IMR-90 (cell line): ENCODE measurements at regions of chr11 and their contacts with region 1.

Region 1: GRCh38 chr11:76919887-76920746 is 59.4 kb downstream of the ACER3 start:
- DNase-seq: peak; percentile 81
- ATAC-seq: peak; percentile 74
- H3K4me3 ChIP-seq: no peak overlapping the region
- H3K27ac ChIP-seq: no peak overlapping the region
- H3K4me1 ChIP-seq: peaks cover 3% of the 10 kb centered on the region; the same call in 1 of the 2 replicates
- H3K27me3 ChIP-seq: no peaks in the 10 kb centered on the region
- CTCF ChIP-seq: peak; percentile 90
- POLR2A ChIP-seq: no peak
- RAD21 ChIP-seq: peak; percentile 70

Region 2: DNA sequence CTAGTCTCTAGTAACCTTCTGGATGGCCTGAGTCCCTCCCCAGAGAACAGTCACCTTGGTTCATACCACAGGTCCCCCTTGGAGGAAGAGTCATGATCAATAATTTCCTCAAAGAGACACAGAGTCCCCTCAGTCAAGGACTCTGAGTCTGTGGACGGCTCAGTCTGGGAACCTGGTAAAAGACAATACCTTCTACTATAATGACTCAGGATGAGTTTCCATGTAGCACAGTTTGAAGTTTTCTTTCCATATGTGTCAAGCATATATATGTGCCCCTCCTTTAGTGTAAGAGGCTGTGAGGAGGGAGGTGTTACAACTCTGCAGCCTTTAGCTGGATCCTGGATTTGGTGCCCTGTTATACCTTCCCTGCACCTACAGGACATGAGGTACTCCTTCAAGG is 191.3 kb before region 1 on chr11:
- CTCF ChIA-PET with region 1: interaction called, 21 read pairs
- POLR2A ChIA-PET with region 1: no interaction called
- dilution Hi-C with region 1: no loop called
- in situ Hi-C with region 1: loop called (anchors 5 kb)
- intact Hi-C with region 1: no loop called
- DNase-seq: no peak
- ATAC-seq: no peak
- H3K4me3 ChIP-seq: no peak overlapping the region
- H3K27ac ChIP-seq: no peak overlapping the region
- H3K4me1 ChIP-seq: no peaks in the 10 kb centered on the region
- H3K27me3 ChIP-seq: peaks cover 73% of the 10 kb centered on the region
- CTCF ChIP-seq: no peak
- POLR2A ChIP-seq: no peak
- RAD21 ChIP-seq: no peak

Region 3: DNA sequence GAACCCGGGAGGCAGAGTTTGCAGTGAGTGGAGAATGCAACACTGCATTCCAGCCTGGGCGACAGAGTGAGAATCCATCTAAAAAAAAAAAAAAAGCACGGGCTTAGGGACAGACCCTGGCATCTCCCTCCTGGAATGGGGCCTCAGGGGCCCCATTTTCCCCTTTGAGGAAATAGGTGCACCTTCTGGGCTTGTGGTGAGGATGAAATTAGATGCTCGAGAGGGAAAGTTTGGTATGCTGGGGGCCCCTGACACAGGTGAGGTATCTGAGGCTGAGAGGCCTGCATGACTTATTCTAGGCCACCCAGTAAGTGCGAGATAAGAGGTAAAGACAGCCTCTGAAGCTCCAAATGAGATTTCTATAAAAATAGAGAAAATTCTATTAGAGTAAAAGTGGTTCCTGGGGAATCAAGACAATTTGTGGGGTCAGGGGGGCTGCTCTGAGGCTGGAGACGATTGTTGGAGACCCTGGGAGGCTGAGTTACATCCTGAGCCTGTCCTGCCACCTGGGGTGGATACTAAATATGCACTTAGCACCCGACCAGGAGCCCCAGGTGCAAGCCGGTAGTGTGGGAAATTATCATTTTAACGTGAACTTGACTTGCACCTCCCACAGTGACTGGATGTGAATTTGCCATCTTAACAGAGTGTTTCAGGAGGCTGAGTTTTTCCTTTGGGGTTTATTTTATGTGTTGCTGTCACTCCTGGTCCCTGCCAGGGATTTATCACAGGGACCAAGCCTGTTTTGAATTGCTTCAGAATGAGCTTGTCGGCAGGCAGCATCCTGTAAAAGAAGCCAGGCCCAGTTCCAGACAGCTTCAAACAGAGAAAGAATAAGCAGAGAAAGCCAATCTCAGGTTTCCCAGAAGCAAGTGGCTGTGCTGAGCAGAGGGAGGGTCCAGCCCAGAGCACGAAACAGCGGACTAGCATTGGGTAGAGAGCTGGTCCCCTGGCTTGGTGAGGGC is 185.4 kb before region 1 on chr11:
- CTCF ChIA-PET with region 1: interaction called, 21 read pairs
- POLR2A ChIA-PET with region 1: no interaction called
- dilution Hi-C with region 1: no loop called
- in situ Hi-C with region 1: loop called (anchors 5 kb)
- intact Hi-C with region 1: loop called (anchors 1 kb)
- DNase-seq: no peak
- ATAC-seq: no peak; the same call in 1 of the 2 replicates
- H3K4me3 ChIP-seq: no peak overlapping the region
- H3K27ac ChIP-seq: no peak overlapping the region
- H3K4me1 ChIP-seq: peaks cover 2% of the 10 kb centered on the region; the same call in 1 of the 2 replicates
- H3K27me3 ChIP-seq: peaks cover 52% of the 10 kb centered on the region
- CTCF ChIP-seq: no peak
- POLR2A ChIP-seq: no peak
- RAD21 ChIP-seq: no peak

Region 4: DNA sequence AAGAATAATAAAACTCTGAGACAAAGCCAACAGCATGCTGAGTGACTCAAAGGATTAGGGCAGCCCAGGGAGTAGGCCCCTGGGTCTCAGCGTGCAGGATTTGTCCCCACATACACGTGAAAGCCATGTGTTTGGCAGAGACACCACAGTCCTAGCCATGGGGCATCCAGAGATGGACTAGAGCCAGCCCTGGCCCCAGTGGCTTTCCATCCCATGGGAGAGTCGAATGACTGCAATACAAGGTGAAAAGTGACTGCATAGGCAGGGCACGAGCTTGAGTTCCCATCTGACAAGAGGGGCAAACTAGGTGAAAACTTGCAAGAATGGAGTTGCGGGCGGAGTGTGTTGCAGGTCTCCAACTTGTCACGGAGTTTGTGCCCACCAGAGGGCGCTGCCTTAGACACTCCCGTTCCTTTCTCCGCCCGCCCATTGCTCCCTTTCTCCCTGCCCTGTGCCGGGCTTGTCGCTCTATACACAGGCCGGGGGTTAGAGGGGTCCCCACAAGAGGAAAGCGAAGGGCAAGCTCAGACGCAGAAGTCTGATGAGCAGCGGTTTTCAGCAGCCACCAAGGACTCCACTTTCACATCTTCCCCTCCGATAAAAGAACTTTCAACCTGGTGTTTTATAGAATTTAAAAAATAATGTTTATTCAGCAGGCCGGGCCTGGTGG is 112.8 kb before region 1 on chr11:
- CTCF ChIA-PET with region 1: interaction called, 25 read pairs
- POLR2A ChIA-PET with region 1: interaction called, 3 read pairs
- dilution Hi-C with region 1: no loop called
- in situ Hi-C with region 1: loop called (anchors 5 kb)
- intact Hi-C with region 1: loop called (anchors 1 kb)
- DNase-seq: peak; percentile 69
- ATAC-seq: peak; percentile 62
- H3K4me3 ChIP-seq: no peak overlapping the region
- H3K27ac ChIP-seq: no peak overlapping the region
- H3K4me1 ChIP-seq: peaks cover 28% of the 10 kb centered on the region
- H3K27me3 ChIP-seq: no peaks in the 10 kb centered on the region; the same call in 1 of the 2 replicates
- CTCF ChIP-seq: peak; percentile 64
- POLR2A ChIP-seq: no peak
- RAD21 ChIP-seq: peak; percentile 58

Region 5: GRCh38 chr11:77019976-77020595 is 100.0 kb after region 1 on chr11:
- CTCF ChIA-PET with region 1: interaction called, 4 read pairs
- POLR2A ChIA-PET with region 1: no interaction called
- dilution Hi-C with region 1: no loop called
- in situ Hi-C with region 1: no loop called
- intact Hi-C with region 1: loop called (anchors 5 kb)
- DNase-seq: peak; percentile 61
- ATAC-seq: peak; percentile 74
- H3K4me3 ChIP-seq: no peak overlapping the region
- H3K27ac ChIP-seq: no peak overlapping the region
- H3K4me1 ChIP-seq: peaks cover 7% of the 10 kb centered on the region; the same call in 1 of the 2 replicates
- H3K27me3 ChIP-seq: no peaks in the 10 kb centered on the region
- CTCF ChIP-seq: no peak
- POLR2A ChIP-seq: no peak
- RAD21 ChIP-seq: no peak

Region 6: GRCh38 chr11:77039491-77040400 is 119.6 kb after region 1 on chr11:
- CTCF ChIA-PET with region 1: interaction called, 9 read pairs
- POLR2A ChIA-PET with region 1: no interaction called
- dilution Hi-C with region 1: no loop called
- in situ Hi-C with region 1: no loop called
- intact Hi-C with region 1: loop called (anchors 2 kb)
- DNase-seq: peak; percentile 33
- ATAC-seq: peak; percentile 66
- H3K4me3 ChIP-seq: peak overlapping the region; percentile 35
- H3K27ac ChIP-seq: no peak overlapping the region
- H3K4me1 ChIP-seq: peaks cover 3% of the 10 kb centered on the region; the same call in 1 of the 2 replicates
- H3K27me3 ChIP-seq: peaks cover 29% of the 10 kb centered on the region
- CTCF ChIP-seq: peak; percentile 50
- POLR2A ChIP-seq: no peak
- RAD21 ChIP-seq: peak; percentile 44

Region 7: GRCh38 chr11:77187776-77188632 is 267.9 kb after region 1 on chr11:
- CTCF ChIA-PET with region 1: interaction called, 4 read pairs
- POLR2A ChIA-PET with region 1: no interaction called
- dilution Hi-C with region 1: no loop called
- in situ Hi-C with region 1: no loop called
- intact Hi-C with region 1: loop called (anchors 10 kb)
- DNase-seq: peak; percentile 75
- ATAC-seq: peak; percentile 95
- H3K4me3 ChIP-seq: no peak overlapping the region
- H3K27ac ChIP-seq: no peak overlapping the region
- H3K4me1 ChIP-seq: no peaks in the 10 kb centered on the region
- H3K27me3 ChIP-seq: peaks cover 24% of the 10 kb centered on the region
- CTCF ChIP-seq: peak; percentile 94
- POLR2A ChIP-seq: no peak
- RAD21 ChIP-seq: peak; percentile 94